ENCODE measurements at regions of chr6 and their contacts with region 1.

Region 1: DNA sequence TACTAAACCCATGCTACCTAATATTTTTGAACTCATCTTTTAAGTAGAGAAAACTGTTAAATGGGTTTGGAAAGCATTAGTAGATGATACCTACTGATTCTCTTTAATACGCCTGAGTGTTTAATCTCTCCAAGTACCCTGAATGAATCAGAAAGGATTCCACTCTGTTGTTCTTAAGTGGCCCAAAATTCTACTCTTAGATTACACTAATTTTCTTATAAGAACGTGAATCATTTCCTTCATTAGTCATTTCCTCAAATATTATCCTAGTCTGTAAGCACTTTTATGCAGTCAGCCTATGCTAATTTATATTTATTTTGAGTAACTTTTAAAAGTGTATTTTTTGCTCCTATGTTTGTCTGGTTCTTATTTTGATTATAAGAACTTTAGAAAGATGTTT is 380.0 kb downstream of the BTBD9 start:
- DNase-seq: peak; percentile 87
- ATAC-seq: peak; percentile 53
- H3K4me3 ChIP-seq: peak overlapping the region; percentile 6; the same call in 1 of the 2 replicates
- H3K27ac ChIP-seq: peak overlapping the region; percentile 74
- H3K4me1 ChIP-seq: peaks cover 51% of the 10 kb centered on the region
- H3K27me3 ChIP-seq: no peaks in the 10 kb centered on the region
- CTCF ChIP-seq: no peak

Region 2: DNA sequence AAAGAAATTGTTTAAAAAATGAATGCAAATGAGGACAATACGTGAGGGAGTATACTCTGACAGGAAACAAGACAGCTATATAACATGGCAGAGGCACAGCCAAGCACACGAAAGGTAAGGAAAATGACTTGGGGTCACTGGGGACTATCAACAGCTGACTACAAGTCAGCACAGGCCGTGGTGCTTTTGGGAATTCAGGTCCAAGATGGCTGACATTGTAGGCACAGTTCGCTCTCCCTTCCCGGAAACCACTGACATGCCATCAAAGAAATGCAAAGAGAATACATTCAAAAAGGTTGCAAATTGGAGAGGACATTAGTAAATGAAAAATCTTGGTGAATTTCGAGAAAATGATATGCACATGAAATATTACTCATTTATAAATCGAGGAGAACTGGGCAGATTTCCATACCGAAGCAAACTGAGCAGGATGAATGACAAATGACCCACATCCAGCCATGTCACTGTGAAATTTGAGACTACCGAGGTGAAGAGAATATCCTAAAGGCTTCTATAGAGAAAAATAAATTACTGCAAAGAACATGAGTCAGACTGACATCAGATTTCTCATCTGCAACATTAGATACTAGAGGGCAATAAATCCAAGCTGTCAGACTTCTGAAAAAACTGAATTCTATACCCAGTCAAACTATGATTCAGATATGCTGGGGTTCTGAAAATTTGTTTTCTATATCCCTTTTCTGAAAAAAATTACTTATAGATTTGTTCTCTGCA is 11.1 kb before region 1 on chr6:
- CTCF ChIA-PET with region 1: no interaction called
- POLR2A ChIA-PET with region 1: no interaction called
- intact Hi-C with region 1: loop called (anchors 1 kb)
- DNase-seq: peak; percentile 95
- ATAC-seq: peak; percentile 99
- H3K4me3 ChIP-seq: peak overlapping the region; percentile 12
- H3K27ac ChIP-seq: peak overlapping the region; percentile 84
- H3K4me1 ChIP-seq: peaks cover 14% of the 10 kb centered on the region
- H3K27me3 ChIP-seq: no peaks in the 10 kb centered on the region
- CTCF ChIP-seq: no peak

Measured in PC-3 (cell line).